Calu3 (cell line): ENCODE measurements at regions of chr12 and their contacts with region 1.

Region 1: GRCh38 chr12:72264548-72265175 is 7.5 kb upstream of the TRHDE start:
- DNase-seq: no peak
- H3K4me3 Mint-ChIP-seq: no peak overlapping the region
- H3K27ac Mint-ChIP-seq: no peak overlapping the region
- H3K4me1 Mint-ChIP-seq: peaks cover 16% of the 10 kb centered on the region
- H3K27me3 Mint-ChIP-seq: no peaks in the 10 kb centered on the region
- CTCF ChIP-seq: peak; percentile 38

Region 2: GRCh38 chr12:72189271-72189670 is 75.4 kb before region 1 on chr12:
- CTCF ChIA-PET with region 1: no interaction called
- intact Hi-C with region 1: no loop called
- DNase-seq: no peak
- H3K4me3 Mint-ChIP-seq: no peak overlapping the region
- H3K27ac Mint-ChIP-seq: no peak overlapping the region
- H3K4me1 Mint-ChIP-seq: no peaks in the 10 kb centered on the region
- H3K27me3 Mint-ChIP-seq: no peaks in the 10 kb centered on the region
- CTCF ChIP-seq: no peak

Region 3: DNA sequence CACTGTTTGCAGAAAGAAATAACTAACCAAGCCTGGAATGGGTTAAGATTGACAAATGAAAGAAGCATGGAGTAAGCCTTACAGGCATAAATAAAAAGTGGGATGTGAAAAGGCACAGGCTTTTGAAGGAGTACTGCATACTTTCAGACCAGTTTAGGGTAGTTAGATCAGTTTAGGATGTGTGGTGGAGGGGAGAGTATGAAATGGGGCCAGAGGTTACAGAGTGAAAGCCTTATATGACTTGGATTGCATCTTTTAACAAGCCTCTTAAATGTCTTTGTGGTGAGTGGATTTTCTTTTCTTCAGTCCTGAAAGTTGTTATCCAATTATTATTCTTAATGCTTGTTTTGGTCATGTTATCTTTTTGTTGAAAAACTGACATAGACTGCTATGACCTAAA is 44.7 kb before region 1 on chr12:
- CTCF ChIA-PET with region 1: no interaction called
- intact Hi-C with region 1: no loop called
- DNase-seq: no peak
- H3K4me3 Mint-ChIP-seq: no peak overlapping the region
- H3K27ac Mint-ChIP-seq: no peak overlapping the region
- H3K4me1 Mint-ChIP-seq: no peaks in the 10 kb centered on the region
- H3K27me3 Mint-ChIP-seq: no peaks in the 10 kb centered on the region
- CTCF ChIP-seq: no peak

Region 4: GRCh38 chr12:72276181-72276805 is 11.6 kb after region 1 on chr12:
- CTCF ChIA-PET with region 1: interaction called, 9 read pairs
- intact Hi-C with region 1: loop called (anchors 1 kb)
- DNase-seq: no peak
- H3K4me3 Mint-ChIP-seq: peak overlapping the region; percentile 92
- H3K27ac Mint-ChIP-seq: peak overlapping the region; percentile 73
- H3K4me1 Mint-ChIP-seq: peaks cover 44% of the 10 kb centered on the region
- H3K27me3 Mint-ChIP-seq: no peaks in the 10 kb centered on the region
- CTCF ChIP-seq: no peak

Region 5: DNA sequence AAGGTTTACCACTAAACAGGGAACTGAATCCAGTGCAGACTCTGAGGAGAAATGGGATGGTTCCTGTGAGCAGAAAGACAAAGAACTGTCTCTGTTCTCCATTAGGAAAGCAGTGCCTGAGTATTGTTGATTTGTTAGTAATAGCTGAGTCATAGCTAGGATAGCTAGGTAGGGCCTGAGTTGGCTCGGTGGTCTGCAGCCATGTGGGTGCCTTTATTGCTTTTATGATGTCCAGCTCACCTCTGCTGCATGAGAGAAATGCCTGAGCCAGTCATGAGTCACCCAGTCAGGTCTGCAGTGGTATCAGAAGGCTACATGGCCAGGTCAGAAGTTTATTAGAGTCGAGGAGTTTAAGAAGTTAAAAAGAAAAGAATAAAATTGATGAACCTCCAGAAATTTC is 31.7 kb after region 1 on chr12:
- CTCF ChIA-PET with region 1: interaction called, 14 read pairs
- intact Hi-C with region 1: no loop called
- DNase-seq: peak; percentile 71
- H3K4me3 Mint-ChIP-seq: peak overlapping the region; percentile 6
- H3K27ac Mint-ChIP-seq: peak overlapping the region; percentile 74
- H3K4me1 Mint-ChIP-seq: peaks cover 51% of the 10 kb centered on the region
- H3K27me3 Mint-ChIP-seq: no peaks in the 10 kb centered on the region
- CTCF ChIP-seq: no peak

Region 6: GRCh38 chr12:72380441-72380840 is 115.8 kb after region 1 on chr12:
- CTCF ChIA-PET with region 1: no interaction called
- intact Hi-C with region 1: no loop called
- DNase-seq: no peak
- H3K4me3 Mint-ChIP-seq: no peak overlapping the region
- H3K27ac Mint-ChIP-seq: no peak overlapping the region
- H3K4me1 Mint-ChIP-seq: no peaks in the 10 kb centered on the region
- H3K27me3 Mint-ChIP-seq: no peaks in the 10 kb centered on the region
- CTCF ChIP-seq: no peak